Left colon (tissue), 2 donors: ENCODE measurements at regions of chr15 and their contacts with region 1.

Region 1: DNA sequence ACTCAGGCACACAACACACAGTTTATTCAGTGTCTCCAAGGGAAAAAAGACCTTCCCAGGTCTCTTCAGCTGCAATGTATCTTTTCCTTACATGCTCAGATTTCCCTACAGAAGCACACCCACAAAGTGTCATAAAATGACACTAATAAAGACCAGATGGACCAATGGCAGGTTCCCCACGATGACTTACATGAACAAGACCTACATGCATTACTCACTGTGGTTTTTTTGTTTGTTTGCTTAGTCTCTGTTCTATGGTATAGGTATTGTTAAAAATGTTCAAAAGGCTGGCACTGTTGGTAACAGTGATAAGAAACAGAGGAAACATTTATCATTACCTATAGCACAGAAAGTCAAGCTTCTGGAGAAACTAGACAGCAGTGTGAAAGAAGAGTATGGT is 318.2 kb upstream of the TMCO5A start:
- DNase-seq: no peak
- ATAC-seq: no peak

Region 2: GRCh38 chr15:37586976-37587375 is 29.2 kb before region 1 on chr15:
- intact Hi-C with region 1: loop called in 1 of 2 experiments (anchors 2 kb)
- DNase-seq: no peak
- ATAC-seq: no peak